ENCODE measurements at regions of chr3 and their contacts with region 1.

Region 1: DNA sequence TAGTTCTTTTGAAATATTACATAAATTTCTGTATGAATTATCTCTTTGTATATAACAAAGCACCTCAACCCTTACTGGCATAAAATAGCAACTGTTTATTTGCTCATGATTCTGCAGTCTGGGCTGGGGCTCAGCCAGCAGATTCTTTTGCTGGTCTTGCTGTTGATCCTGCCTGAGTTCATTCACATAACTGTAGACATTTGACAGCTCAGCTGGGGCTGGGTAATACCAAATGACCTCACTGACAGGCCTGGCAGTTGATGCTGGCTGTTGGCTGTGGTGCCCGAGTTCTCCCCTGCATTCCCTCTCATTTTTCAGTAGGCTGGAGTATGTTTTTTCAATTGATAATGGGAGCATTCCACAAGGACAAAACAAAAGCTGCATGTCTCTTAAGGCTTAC is 449.9 kb upstream of the GOLIM4 start:
- DNase-seq: no peak
- ATAC-seq: peak; percentile 36
- H3K4me3 ChIP-seq: no peak overlapping the region
- H3K27ac ChIP-seq: no peak overlapping the region
- H3K4me1 ChIP-seq: no peaks in the 10 kb centered on the region
- H3K27me3 ChIP-seq: no peaks in the 10 kb centered on the region
- CTCF ChIP-seq: no peak
- EP300 ChIP-seq: no peak
- POLR2A ChIP-seq: no peak
- RAD21 ChIP-seq: no peak

Region 2: GRCh38 chr3:168511428-168512014 is 34.1 kb before region 1 on chr3:
- CTCF ChIA-PET with region 1: interaction called, 7 read pairs
- POLR2A ChIA-PET with region 1: no interaction called
- RAD21 ChIA-PET with region 1: interaction called, 10 read pairs
- SMC1A ChIA-PET with region 1: interaction called, 12 read pairs
- in situ Hi-C with region 1: no loop called
- intact Hi-C with region 1: no loop called
- DNase-seq: no peak
- ATAC-seq: peak; percentile 50; the same call in 2 of the 3 replicates
- H3K4me3 ChIP-seq: no peak overlapping the region
- H3K27ac ChIP-seq: no peak overlapping the region
- H3K4me1 ChIP-seq: no peaks in the 10 kb centered on the region
- H3K27me3 ChIP-seq: no peaks in the 10 kb centered on the region
- CTCF ChIP-seq: peak; percentile 47 to 58 (median 49)
- EP300 ChIP-seq: no peak
- POLR2A ChIP-seq: no peak
- RAD21 ChIP-seq: peak; percentile 47

Region 3: GRCh38 chr3:168517249-168518071 is 28.1 kb before region 1 on chr3:
- CTCF ChIA-PET with region 1: interaction called, 4 read pairs
- POLR2A ChIA-PET with region 1: interaction called, 5 read pairs
- RAD21 ChIA-PET with region 1: no interaction called
- SMC1A ChIA-PET with region 1: interaction called, 12 read pairs
- in situ Hi-C with region 1: no loop called
- intact Hi-C with region 1: no loop called
- DNase-seq: peak; percentile 41
- ATAC-seq: peak; percentile 84
- H3K4me3 ChIP-seq: no peak overlapping the region
- H3K27ac ChIP-seq: 0 out of 2 replicates have a peak overlapping the region, but pooled peaks have one; percentile 2
- H3K4me1 ChIP-seq: no peaks in the 10 kb centered on the region
- H3K27me3 ChIP-seq: no peaks in the 10 kb centered on the region
- CTCF ChIP-seq: no peak
- EP300 ChIP-seq: peak; percentile 48 to 87; a peak in 2 of 4 replicates
- POLR2A ChIP-seq: no peak
- RAD21 ChIP-seq: no peak

Region 4: GRCh38 chr3:168707900-168708299 is 162.3 kb after region 1 on chr3:
- CTCF ChIA-PET with region 1: no interaction called
- POLR2A ChIA-PET with region 1: no interaction called
- RAD21 ChIA-PET with region 1: no interaction called
- SMC1A ChIA-PET with region 1: no interaction called
- in situ Hi-C with region 1: no loop called
- intact Hi-C with region 1: no loop called
- DNase-seq: no peak
- ATAC-seq: peak; percentile 85
- H3K4me3 ChIP-seq: no peak overlapping the region
- H3K27ac ChIP-seq: no peak overlapping the region
- H3K4me1 ChIP-seq: no peaks in the 10 kb centered on the region
- H3K27me3 ChIP-seq: no peaks in the 10 kb centered on the region
- CTCF ChIP-seq: no peak
- EP300 ChIP-seq: no peak
- POLR2A ChIP-seq: no peak
- RAD21 ChIP-seq: no peak

Region 5: GRCh38 chr3:168820810-168821415 is 275.3 kb after region 1 on chr3:
- CTCF ChIA-PET with region 1: no interaction called
- POLR2A ChIA-PET with region 1: no interaction called
- RAD21 ChIA-PET with region 1: no interaction called
- SMC1A ChIA-PET with region 1: no interaction called
- in situ Hi-C with region 1: no loop called
- intact Hi-C with region 1: no loop called
- DNase-seq: no peak
- ATAC-seq: no peak
- H3K4me3 ChIP-seq: no peak overlapping the region
- H3K27ac ChIP-seq: no peak overlapping the region
- H3K4me1 ChIP-seq: no peaks in the 10 kb centered on the region
- H3K27me3 ChIP-seq: no peaks in the 10 kb centered on the region
- CTCF ChIP-seq: no peak
- EP300 ChIP-seq: no peak
- POLR2A ChIP-seq: no peak
- RAD21 ChIP-seq: no peak